ENCODE measurements at regions of chr5 and their contacts with region 1.

Region 1: GRCh38 chr5:39074016-39074886 is at the start of gene RICTOR:
- DNase-seq: peak; percentile 92
- H3K4me3 Mint-ChIP-seq: peak within 1 kb of the TSS; percentile 95
- H3K27ac Mint-ChIP-seq: peak within 1 kb of the TSS; percentile 92
- H3K4me1 Mint-ChIP-seq: peaks cover 31% of the 10 kb centered on the region
- H3K27me3 Mint-ChIP-seq: peaks cover 23% of the 10 kb centered on the region
- total RNA-seq, gene RICTOR: 25.0 to 26.1 TPM

Region 2: DNA sequence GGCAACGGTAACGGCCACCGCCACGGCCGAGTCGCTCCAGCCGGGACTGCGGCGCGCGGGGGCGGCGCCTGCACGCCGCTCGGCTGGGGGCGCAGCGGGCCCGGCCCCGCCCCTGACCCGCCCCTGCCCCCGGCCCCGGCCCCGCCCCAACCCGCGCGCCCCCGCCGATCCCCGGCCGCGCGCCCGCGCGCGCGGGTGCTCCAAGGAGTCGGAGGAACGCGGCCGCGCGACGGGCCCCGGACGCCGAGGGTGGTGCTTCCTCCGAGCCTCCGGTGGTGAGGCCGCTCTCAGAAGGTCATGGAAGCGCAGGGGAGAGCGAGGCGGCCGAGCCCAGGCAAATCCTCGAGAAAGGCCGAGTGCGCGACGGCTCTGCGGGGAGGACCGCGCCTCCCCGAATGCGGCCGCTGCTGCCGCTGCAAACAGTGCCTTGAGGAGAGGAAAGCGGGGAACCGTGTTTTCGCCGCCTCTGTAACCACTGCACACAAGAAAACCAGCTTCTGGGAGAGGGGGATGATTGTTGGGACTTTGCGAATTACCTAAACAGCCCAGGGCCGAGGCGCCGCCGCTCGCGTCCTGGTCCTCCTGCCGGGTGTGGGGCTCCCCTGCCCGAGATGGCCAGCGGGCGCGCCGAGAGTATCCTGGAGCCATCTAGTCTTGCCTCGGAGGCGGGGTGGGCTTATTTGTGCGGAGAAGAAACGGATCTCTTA is 517.5 kb before region 1 on chr5 and contains the start of gene LIFR:
- CTCF ChIA-PET with region 1: no interaction called
- intact Hi-C with region 1: loop called (anchors 5 kb)
- DNase-seq: peak; percentile 66
- H3K4me3 Mint-ChIP-seq: peak within 1 kb of the TSS; percentile 79
- H3K27ac Mint-ChIP-seq: no peak within 1 kb of the TSS
- H3K4me1 Mint-ChIP-seq: peaks cover 7% of the 10 kb centered on the region
- H3K27me3 Mint-ChIP-seq: peaks cover 52% of the 10 kb centered on the region
- total RNA-seq, gene LIFR: 0.20 TPM in 1 of 2 experiments, not detected in the other

Region 3: GRCh38 chr5:39015743-39016586 is 58.3 kb before region 1 on chr5:
- CTCF ChIA-PET with region 1: no interaction called
- intact Hi-C with region 1: loop called (anchors 2 kb)
- DNase-seq: no peak
- H3K4me3 Mint-ChIP-seq: no peak overlapping the region
- H3K27ac Mint-ChIP-seq: peak overlapping the region; percentile 3
- H3K4me1 Mint-ChIP-seq: peaks cover 27% of the 10 kb centered on the region
- H3K27me3 Mint-ChIP-seq: no peaks in the 10 kb centered on the region

Region 4: GRCh38 chr5:39058178-39058921 is 15.9 kb before region 1 on chr5:
- CTCF ChIA-PET with region 1: interaction called, 6 read pairs
- intact Hi-C with region 1: loop called (anchors 2 kb)
- DNase-seq: no peak
- H3K4me3 Mint-ChIP-seq: no peak overlapping the region
- H3K27ac Mint-ChIP-seq: no peak overlapping the region
- H3K4me1 Mint-ChIP-seq: peaks cover 53% of the 10 kb centered on the region
- H3K27me3 Mint-ChIP-seq: no peaks in the 10 kb centered on the region

Region 5: GRCh38 chr5:39138892-39139291 is 64.6 kb after region 1 on chr5:
- CTCF ChIA-PET with region 1: no interaction called
- intact Hi-C with region 1: loop called (anchors 5 kb)
- DNase-seq: no peak
- H3K4me3 Mint-ChIP-seq: no peak overlapping the region
- H3K27ac Mint-ChIP-seq: no peak overlapping the region
- H3K4me1 Mint-ChIP-seq: peaks cover 23% of the 10 kb centered on the region
- H3K27me3 Mint-ChIP-seq: no peaks in the 10 kb centered on the region

Region 6: DNA sequence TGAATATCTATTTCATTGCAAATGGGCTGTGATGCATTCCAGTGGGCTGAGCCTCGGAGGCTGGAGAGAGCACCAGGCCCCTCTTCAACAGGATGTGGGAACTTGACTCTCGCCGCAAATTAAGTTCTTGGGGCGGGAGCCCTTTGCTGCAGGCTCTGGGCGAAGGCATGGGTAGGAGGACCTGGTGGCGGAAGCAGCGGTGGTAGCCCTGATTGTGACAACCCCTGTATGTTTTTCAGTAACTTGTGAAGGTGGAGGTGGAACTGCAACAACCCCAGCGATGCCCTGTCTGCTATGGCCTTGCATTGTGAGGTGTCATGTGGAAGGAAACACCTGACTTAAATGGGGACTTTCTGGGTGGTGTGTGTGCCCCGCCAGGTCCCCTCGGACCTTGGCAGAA is 135.7 kb after region 1 on chr5:
- CTCF ChIA-PET with region 1: no interaction called
- intact Hi-C with region 1: loop called (anchors 2 kb)
- DNase-seq: peak; percentile 83
- H3K4me3 Mint-ChIP-seq: peak overlapping the region; percentile 80
- H3K27ac Mint-ChIP-seq: peak overlapping the region; percentile 99
- H3K4me1 Mint-ChIP-seq: peaks cover 78% of the 10 kb centered on the region
- H3K27me3 Mint-ChIP-seq: no peaks in the 10 kb centered on the region